Sigmoid colon (tissue), 7 donors: ENCODE measurements at regions of chr2 and their contacts with region 1.

Region 1: DNA sequence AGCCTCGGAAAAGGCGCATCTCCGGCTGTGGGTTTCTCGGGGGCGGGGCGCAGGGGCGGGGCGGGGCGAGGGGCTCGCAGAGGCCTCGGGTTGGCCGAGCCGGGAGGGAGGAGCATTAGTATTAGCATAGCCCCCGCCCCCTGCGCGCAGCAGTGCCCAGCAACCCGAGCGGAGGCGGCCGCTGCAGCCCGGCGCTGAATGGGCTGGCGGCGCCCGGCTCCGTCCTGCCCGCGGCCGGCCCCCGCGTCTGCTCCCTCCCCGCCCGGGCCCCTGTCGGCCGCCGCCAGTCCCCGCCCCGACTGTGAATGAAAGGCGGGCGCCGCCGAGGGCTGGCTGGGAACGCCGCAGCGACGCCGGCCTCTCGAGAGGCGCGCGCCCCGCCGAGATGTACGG is at the start of gene EFR3B:
- DNase-seq: peak; percentile 97
- H3K4me3 ChIP-seq: peak within 1 kb of the TSS; percentile 54 to 87 (median 74)
- H3K27ac ChIP-seq: peak within 1 kb of the TSS; percentile 77 to 92 (median 84)
- H3K4me1 ChIP-seq: peaks cover 2 to 22% (median 19%) of the 10 kb centered on the region in 4 donors
- H3K27me3 ChIP-seq: no peaks in the 10 kb centered on the region
- CTCF ChIP-seq: no peak
- EP300 ChIP-seq: no peak
- POLR2A ChIP-seq: no peak
- total RNA-seq, gene EFR3B: 0.49 to 1.9 (median 1.6) TPM

Region 2: DNA sequence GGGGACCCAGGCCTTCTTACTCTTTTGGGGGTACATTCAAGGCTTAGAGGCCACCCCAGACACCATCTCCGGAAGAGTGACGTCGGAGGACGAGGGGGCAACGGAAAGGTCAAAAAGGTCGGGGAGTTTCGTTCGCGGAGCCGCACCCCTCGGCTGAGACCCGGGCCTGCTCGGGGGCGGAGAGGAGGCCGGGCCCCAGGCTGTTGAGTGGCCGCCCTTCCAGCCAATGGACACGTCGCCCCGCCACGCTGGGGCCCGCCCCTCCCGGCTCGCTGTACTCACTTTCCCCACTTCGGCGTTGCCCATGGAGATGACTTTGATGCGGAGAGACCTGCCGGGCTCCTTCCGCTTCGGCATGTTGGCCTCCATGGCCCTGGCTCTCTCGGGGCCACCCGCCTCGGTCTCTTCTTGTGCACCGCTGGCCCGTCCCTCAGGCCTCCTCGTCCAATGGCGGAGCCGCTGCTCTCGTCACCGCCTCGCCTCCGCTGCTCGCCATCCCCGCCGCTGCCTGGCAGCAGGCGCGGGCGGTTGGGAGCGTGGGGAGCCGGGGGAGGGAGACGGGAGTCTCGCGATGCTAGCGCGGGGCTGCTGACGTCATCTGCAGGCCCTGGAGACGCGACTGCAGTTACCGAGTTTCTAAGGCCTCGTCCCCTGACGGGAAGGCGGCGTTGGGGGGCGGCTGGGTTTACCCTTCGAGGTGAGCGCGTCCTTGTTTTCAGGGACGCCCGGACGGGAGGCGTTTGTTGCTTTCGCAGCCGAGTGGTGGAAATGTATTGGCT is 70.2 kb before region 1 on chr2 and contains the start of gene DNAJC27:
- intact Hi-C with region 1: loop called (anchors 5 kb)
- DNase-seq: peak; percentile 99
- H3K4me3 ChIP-seq: peak within 1 kb of the TSS; percentile 63 to 88 (median 76)
- H3K27ac ChIP-seq: peak within 1 kb of the TSS; percentile 96 to 99 (median 98)
- H3K4me1 ChIP-seq: peaks cover 0 to 24% (median 12%) of the 10 kb centered on the region in 4 donors
- H3K27me3 ChIP-seq: no peaks in the 10 kb centered on the region
- CTCF ChIP-seq: no peak
- EP300 ChIP-seq: peak in 2 of 4 donors; percentile 57 to 77
- POLR2A ChIP-seq: peak; percentile 91 to 93
- total RNA-seq, gene DNAJC27: 6.3 to 12.5 (median 7.8) TPM

Region 3: DNA sequence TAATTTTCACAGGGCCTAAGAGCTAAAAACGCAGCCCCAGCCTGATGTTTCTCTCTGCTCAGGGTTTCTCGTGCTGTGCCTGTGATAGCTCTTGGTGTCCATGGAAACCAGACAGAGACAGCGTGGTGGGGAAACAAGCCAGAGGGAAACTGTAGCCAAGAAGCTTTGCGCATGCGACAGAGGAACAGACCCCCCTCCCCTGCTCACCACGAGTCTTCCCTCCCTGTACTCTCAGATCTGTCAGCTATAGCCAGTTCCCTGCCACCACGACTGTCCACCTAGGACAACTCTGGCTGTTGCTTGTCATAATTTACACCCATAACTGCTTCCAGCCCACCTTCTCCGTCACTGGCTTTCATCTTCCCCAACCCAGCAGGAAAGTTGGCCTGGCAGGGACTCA is 57.0 kb before region 1 on chr2:
- intact Hi-C with region 1: loop called (anchors 2 kb)
- DNase-seq: peak; percentile 79
- H3K4me3 ChIP-seq: no peak overlapping the region
- H3K27ac ChIP-seq: peak overlapping the region; percentile 18 to 77 (median 69)
- H3K4me1 ChIP-seq: peaks cover 0 to 41% (median 28%) of the 10 kb centered on the region in 4 donors
- H3K27me3 ChIP-seq: no peaks in the 10 kb centered on the region
- CTCF ChIP-seq: no peak
- EP300 ChIP-seq: no peak
- POLR2A ChIP-seq: no peak

Region 4: DNA sequence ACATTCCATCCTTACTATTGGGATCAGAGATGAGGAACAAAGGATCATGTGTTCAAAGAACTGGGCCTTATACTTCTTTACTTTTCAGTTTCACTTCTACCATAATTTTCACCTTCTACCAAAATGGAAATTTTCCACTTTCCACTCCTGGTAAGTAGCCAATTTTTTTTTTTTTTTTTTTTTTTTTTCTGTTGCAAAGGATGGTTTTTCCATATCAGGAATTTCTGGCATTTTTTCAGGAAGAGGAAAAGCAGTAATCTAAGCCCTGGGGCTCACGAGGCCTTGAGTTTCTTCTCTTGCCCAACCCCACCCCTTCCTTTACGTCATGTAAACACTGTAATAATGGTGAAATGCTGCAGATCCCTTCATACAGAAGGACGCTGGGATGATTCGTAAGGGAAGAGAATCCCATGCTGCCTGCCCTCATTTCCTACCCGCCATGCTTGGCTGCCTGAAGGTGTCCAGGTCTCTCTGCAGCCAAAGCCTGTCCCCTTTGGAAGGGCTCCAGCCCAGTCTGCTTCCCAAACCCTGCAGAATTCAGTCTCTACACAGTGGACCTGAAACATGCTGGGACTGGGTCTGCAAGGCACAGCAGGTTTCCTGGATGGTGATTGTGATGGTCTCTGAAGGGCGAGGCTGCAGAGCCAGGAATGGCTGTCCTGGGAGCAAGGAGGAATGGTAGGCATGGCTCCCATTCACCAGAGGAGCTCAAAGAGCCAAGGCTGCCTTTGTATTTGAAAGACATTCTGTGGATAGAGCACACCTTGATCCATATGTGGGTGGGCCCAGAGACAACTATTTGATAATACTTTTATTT is 57.0 kb after region 1 on chr2:
- intact Hi-C with region 1: loop called (anchors 2 kb)
- DNase-seq: peak; percentile 83
- H3K4me3 ChIP-seq: no peak overlapping the region
- H3K27ac ChIP-seq: peak overlapping the region; percentile 52 to 73 (median 68)
- H3K4me1 ChIP-seq: peaks cover 0 to 19% (median 10%) of the 10 kb centered on the region in 4 donors
- H3K27me3 ChIP-seq: no peaks in the 10 kb centered on the region
- CTCF ChIP-seq: no peak
- EP300 ChIP-seq: peak in 3 of 4 donors; percentile 12 to 78 (median 31)
- POLR2A ChIP-seq: no peak

Region 5: GRCh38 chr2:25127646-25128045 is 85.7 kb after region 1 on chr2:
- intact Hi-C with region 1: loop called (anchors 5 kb)
- DNase-seq: no peak
- H3K4me3 ChIP-seq: no peak overlapping the region
- H3K27ac ChIP-seq: no peak overlapping the region
- H3K4me1 ChIP-seq: peaks cover 0 to 4% (median 1%) of the 10 kb centered on the region in 4 donors
- H3K27me3 ChIP-seq: peaks cover 0 to 16% (median 4%) of the 10 kb centered on the region in 3 donors
- CTCF ChIP-seq: no peak
- EP300 ChIP-seq: no peak
- POLR2A ChIP-seq: no peak